ENCODE measurements at regions of chr1 and their contacts with region 1.

Region 1: DNA sequence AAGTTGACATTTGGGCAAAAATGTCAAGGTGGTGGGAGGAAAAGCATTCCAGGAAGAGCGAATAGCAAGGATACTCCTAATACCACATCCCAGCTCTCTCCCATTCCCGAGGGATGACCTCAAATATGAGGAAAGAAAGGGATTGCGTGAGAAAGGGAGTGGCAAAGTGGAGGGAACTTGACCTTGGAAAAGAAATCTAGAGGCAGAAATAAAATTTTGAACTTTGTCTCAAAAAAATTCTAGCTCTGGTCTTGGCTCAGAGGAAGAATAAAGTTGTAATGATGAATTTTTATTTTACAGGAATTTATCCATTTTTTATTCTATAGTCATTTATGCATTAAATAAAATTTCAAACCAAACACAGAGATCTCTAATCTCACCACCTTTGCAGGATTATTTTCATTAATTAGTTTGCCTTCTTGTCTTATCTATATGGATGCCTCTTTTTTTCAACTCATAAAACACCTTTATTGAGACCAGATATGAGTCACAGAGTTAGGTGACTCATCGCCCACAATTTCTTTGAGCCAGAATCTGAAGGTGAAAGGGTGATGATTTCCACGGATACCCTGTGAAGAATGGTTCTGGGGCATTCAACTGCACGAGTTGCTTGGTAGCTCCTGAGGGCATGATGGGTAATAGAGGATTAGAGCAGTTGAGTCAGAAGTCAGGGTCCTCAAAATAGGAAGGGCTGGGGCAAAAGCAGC is 128.0 kb downstream of the TBX19 start:
- DNase-seq: peak in 8 of 9 experiments; percentile 48 to 82 (median 58)
- ATAC-seq: peak; percentile 81
- H3K4me3 ChIP-seq: no peak overlapping the region
- H3K4me3 Mint-ChIP-seq: peak overlapping the region; percentile 42
- H3K27ac ChIP-seq: no peak overlapping the region
- H3K27ac Mint-ChIP-seq: peak overlapping the region; percentile 76
- H3K4me1 ChIP-seq: peaks cover 17% of the 10 kb centered on the region
- H3K4me1 Mint-ChIP-seq: peaks cover 46% of the 10 kb centered on the region
- H3K27me3 ChIP-seq: no peaks in the 10 kb centered on the region
- H3K27me3 Mint-ChIP-seq: no peaks in the 10 kb centered on the region
- CTCF ChIP-seq: no peak

Region 2: GRCh38 chr1:168360151-168361021 is 48.3 kb before region 1 on chr1:
- CTCF ChIA-PET with region 1: no interaction called
- POLR2A ChIA-PET with region 1: interaction called, 3 read pairs
- intact Hi-C with region 1: loop called in 1 of 2 experiments (anchors 5 kb)
- DNase-seq: peak in 3 of 9 experiments; percentile 14 to 52 (median 46)
- ATAC-seq: no peak
- H3K4me3 ChIP-seq: no peak overlapping the region
- H3K4me3 Mint-ChIP-seq: no peak overlapping the region
- H3K27ac ChIP-seq: no peak overlapping the region
- H3K27ac Mint-ChIP-seq: no peak overlapping the region
- H3K4me1 ChIP-seq: peaks cover 24% of the 10 kb centered on the region
- H3K4me1 Mint-ChIP-seq: peaks cover 33% of the 10 kb centered on the region
- H3K27me3 ChIP-seq: no peaks in the 10 kb centered on the region
- H3K27me3 Mint-ChIP-seq: no peaks in the 10 kb centered on the region
- CTCF ChIP-seq: no peak

Region 3: DNA sequence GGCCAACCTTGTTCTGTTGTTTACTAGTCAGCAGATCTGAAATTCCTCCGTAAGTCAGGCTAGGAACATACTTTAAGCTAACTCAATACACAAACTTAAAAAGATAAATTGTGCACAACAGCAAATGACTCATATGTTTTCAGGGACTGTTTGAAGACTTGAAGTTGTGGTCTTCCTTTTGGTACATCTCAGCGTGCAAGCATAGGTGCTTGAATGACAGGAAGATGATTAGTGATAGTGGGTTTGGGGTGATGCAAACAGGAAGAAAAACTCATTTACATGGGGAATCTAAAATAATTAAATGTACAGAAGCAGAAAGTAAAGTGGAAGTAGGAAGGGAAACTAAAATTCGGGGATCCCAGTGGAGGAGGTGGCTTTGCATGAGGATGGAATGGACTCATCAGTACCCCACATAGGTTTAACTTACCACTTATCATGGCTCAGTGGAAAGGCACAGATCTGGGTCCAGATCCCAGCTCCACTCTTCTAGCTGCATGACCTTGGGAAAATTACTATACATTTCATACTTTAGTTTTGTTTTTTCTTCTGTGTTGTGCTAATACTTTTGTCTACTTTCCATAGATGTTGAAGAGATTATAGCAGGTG is 12.8 kb after region 1 on chr1:
- CTCF ChIA-PET with region 1: no interaction called
- POLR2A ChIA-PET with region 1: interaction called, 4 read pairs
- intact Hi-C with region 1: loop called (anchors 1 kb)
- DNase-seq: peak in 4 of 9 experiments; percentile 25 to 79 (median 51)
- ATAC-seq: peak; percentile 87
- H3K4me3 ChIP-seq: no peak overlapping the region
- H3K4me3 Mint-ChIP-seq: peak overlapping the region; percentile 10
- H3K27ac ChIP-seq: peak overlapping the region in 1 of 2 experiments; percentile 63
- H3K27ac Mint-ChIP-seq: peak overlapping the region; percentile 75
- H3K4me1 ChIP-seq: peaks cover 14% of the 10 kb centered on the region
- H3K4me1 Mint-ChIP-seq: peaks cover 34% of the 10 kb centered on the region
- H3K27me3 ChIP-seq: no peaks in the 10 kb centered on the region
- H3K27me3 Mint-ChIP-seq: no peaks in the 10 kb centered on the region
- CTCF ChIP-seq: no peak

Region 4: DNA sequence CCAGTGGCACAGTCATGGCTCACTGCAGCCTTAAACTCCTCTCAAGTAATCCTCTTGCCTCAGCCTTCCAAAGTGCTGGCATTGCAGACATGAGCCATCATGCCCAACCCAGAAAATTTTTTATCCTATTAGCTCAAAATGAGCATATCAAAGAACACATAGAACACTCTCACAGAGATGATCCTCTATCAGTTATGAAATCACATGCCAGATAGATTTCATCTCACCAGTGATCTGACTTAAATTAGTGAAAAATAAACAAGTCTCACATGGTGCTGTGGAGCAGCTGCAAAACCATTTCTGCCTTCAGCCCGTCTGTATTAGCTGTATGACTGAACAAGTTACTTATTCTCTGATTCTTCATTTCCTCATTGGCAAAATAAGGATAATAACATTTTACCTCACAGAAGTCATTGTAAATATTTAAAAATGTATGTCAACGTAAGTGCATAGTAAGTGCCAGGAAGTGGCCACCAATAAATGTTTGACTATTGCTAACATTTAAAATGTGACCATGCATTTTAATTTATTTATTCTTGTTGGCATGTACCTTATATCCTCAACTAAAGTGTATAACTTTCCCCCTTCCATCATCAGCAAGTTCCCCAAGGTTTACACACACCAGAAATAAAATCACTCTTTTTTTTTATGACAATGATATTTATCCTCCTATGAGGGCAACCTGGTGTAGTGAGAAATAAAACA is 1106.0 kb after region 1 on chr1:
- CTCF ChIA-PET with region 1: no interaction called
- POLR2A ChIA-PET with region 1: no interaction called
- intact Hi-C with region 1: no loop called
- DNase-seq: no peak
- ATAC-seq: no peak
- H3K4me3 ChIP-seq: no peak overlapping the region
- H3K4me3 Mint-ChIP-seq: no peak overlapping the region
- H3K27ac ChIP-seq: no peak overlapping the region
- H3K27ac Mint-ChIP-seq: no peak overlapping the region
- H3K4me1 ChIP-seq: no peaks in the 10 kb centered on the region
- H3K4me1 Mint-ChIP-seq: no peaks in the 10 kb centered on the region
- H3K27me3 ChIP-seq: no peaks in the 10 kb centered on the region
- H3K27me3 Mint-ChIP-seq: no peaks in the 10 kb centered on the region
- CTCF ChIP-seq: no peak

Measured in CD8-positive, alpha-beta T cell (primary cell).